GM13976 (cell line): ENCODE measurements at regions of chr17 and their contacts with region 1.

Region 1: DNA sequence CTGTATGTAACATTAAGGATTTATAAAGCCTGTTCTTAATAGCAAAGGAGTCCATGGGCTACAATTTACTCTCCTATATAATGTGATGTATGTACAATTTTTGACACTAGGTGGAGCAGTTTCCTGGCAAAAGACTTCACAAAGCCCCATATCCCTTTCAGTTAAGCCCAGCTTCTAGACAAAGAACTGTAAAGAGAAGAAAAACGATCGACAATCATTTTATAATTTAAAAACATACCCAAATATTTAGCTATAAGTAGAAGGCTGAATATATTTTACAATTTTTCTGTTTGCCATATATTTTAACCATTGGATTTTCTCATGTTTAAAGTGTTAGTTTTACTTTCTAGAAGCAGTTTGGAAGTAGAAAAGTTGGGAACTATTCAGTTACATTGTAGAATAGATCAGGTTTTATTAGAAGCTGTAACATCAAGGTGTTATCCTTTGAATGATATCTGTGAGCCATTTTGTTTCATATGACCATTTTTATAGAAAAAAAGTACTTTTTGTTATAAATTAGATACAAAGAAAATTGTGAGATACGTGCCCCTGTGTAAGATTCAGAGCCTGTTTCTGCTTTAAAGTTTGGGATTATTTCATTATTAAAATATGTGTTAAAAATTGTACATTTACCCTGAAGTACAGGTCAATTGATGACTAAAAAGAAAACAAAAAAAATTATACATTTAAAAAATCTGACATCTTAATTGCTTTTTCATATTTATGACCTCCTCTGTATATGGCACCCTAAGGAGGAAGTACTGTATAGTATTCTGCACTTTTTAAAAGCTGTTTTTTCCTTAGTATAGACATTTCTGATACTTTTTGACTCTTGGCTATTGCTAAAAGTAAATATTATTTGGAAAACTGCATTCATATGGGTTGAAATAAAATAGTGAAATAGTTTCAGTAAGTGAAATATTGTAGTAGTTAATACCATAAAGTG is 46.3 kb downstream of the VMP1 start:
- DNase-seq: peak; percentile 68
- CTCF ChIP-seq: peak; percentile 47

Region 2: GRCh38 chr17:59804901-59805465 is 51.2 kb after region 1 on chr17:
- in situ Hi-C with region 1: no loop called
- DNase-seq: no peak
- CTCF ChIP-seq: no peak

Region 3: DNA sequence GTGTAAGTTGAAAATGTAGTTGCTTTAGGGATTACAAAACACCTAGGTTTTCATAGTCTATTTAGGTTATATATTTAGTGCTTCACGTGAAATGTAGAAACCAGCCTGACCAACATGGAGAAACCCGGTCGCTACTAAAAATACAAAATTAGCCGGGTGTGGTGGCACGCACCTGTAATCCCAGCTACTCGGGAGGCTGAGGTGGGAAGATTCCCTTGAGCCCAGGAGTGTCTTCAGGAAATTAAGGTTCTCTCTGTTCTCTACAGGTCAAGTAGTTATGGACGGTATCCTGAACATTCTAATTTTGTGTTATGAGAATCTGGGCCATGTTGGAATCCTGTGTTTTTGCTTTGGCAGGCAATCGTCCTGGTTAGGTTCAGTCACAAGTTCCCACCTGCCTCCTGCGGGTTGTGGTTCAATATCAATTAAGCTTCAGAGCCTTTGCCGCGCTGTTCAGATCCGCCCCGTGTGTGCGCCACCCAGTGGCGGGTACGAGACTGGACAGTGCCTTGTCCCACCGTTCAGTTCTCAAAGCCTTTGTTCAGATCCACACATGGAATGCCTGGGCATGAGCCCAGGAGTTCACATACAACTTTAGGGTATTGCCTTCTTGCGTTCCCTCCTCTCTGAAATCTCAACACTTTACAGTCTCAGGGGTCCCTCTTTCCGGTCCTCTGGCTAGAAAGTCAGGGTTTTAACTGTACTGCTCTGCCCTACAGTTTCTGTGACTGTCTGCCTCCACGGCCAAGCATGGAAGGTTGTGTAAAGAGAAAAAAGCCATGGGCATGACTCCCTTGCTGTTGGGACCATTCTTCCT is 283.2 kb after region 1 on chr17:
- in situ Hi-C with region 1: loop called (anchors 10 kb)
- DNase-seq: peak; percentile 77
- CTCF ChIP-seq: peak; percentile 97